Activated CD4-positive, alpha-beta memory T cell treated with anti-CD3 and anti-CD28 coated beads for 36 hours (primary cell): ENCODE measurements at regions of chr22 and their contacts with region 1.

Region 1: GRCh38 chr22:38941488-38941987 is 15.9 kb upstream of the APOBEC3A start:
- DNase-seq: peak; percentile 89
- H3K4me3 Mint-ChIP-seq: peak overlapping the region; percentile 45
- H3K27ac Mint-ChIP-seq: peak overlapping the region; percentile 80
- H3K4me1 Mint-ChIP-seq: peaks cover 35% of the 10 kb centered on the region
- H3K27me3 Mint-ChIP-seq: peaks cover 28% of the 10 kb centered on the region

Region 2: GRCh38 chr22:38793721-38794466 is 147.6 kb before region 1 on chr22 and contains the start of gene DNAL4:
- CTCF ChIA-PET with region 1: no interaction called
- POLR2A ChIA-PET with region 1: no interaction called
- intact Hi-C with region 1: no loop called
- DNase-seq: peak; percentile 95
- H3K4me3 Mint-ChIP-seq: peak within 1 kb of the TSS; percentile 79
- H3K27ac Mint-ChIP-seq: peak within 1 kb of the TSS; percentile 61
- H3K4me1 Mint-ChIP-seq: peaks cover 14% of the 10 kb centered on the region
- H3K27me3 Mint-ChIP-seq: peaks cover 23% of the 10 kb centered on the region
- total RNA-seq, gene DNAL4: 7.7 to 8.3 TPM

Region 3: DNA sequence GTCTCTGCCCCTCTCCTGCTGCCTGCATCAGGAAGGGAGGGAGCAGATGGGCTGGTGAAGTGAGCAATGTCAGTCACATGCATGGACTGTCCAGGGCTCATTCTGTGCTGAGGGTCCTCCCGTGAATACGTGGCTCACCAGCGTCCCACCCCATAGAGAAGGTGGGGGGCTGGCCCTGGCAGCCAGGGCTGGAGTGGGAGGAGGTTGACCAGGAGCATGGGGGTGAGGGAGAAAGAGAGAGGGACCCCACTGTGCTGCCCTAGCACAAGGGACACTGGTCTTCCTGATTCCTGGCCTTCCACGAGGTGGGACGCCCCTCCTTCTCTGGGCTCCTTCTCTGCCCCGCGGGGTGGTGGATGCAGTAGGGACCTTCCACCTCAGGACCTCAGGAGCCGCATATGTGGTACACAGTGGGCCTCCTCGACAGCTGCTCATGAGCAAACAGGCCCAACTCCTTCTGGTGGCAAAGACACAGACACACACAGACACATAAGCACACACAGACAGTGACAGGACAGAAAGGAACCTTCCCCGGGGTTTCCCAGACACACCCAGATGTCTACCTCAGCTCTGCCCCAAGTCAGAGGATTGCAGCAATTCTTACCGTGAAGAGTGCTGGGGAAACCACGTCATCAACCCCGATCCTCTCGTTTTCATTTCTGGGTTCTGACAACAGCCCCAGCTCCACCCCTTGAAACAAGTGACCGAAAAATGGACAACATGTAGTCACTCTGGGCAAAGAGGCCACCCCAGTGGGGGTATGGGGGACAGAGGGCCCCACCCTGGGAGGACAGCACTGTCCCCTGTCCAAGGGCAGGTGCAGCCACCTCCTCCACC is 12.3 kb after region 1 on chr22:
- CTCF ChIA-PET with region 1: interaction called, 6 read pairs
- POLR2A ChIA-PET with region 1: interaction called, 27 read pairs
- intact Hi-C with region 1: loop called (anchors 1 kb)
- DNase-seq: peak; percentile 93
- H3K4me3 Mint-ChIP-seq: peak overlapping the region; percentile 50
- H3K27ac Mint-ChIP-seq: peak overlapping the region; percentile 87
- H3K4me1 Mint-ChIP-seq: peaks cover 31% of the 10 kb centered on the region
- H3K27me3 Mint-ChIP-seq: peaks cover 2% of the 10 kb centered on the region

Region 4: GRCh38 chr22:39039306-39040126 is 98.0 kb after region 1 on chr22:
- CTCF ChIA-PET with region 1: no interaction called
- POLR2A ChIA-PET with region 1: no interaction called
- intact Hi-C with region 1: no loop called
- DNase-seq: no peak
- H3K4me3 Mint-ChIP-seq: peak overlapping the region; percentile 68
- H3K27ac Mint-ChIP-seq: peak overlapping the region; percentile 69
- H3K4me1 Mint-ChIP-seq: peaks cover 23% of the 10 kb centered on the region
- H3K27me3 Mint-ChIP-seq: no peaks in the 10 kb centered on the region

Region 5: GRCh38 chr22:39097098-39098020 is 155.8 kb after region 1 on chr22 and contains the start of gene APOBEC3H:
- CTCF ChIA-PET with region 1: no interaction called
- POLR2A ChIA-PET with region 1: interaction called, 3 read pairs
- intact Hi-C with region 1: loop called (anchors 10 kb)
- DNase-seq: peak; percentile 74
- H3K4me3 Mint-ChIP-seq: peak within 1 kb of the TSS; percentile 78
- H3K27ac Mint-ChIP-seq: peak within 1 kb of the TSS; percentile 91
- H3K4me1 Mint-ChIP-seq: peaks cover 78% of the 10 kb centered on the region
- H3K27me3 Mint-ChIP-seq: no peaks in the 10 kb centered on the region
- total RNA-seq, gene APOBEC3H: 23.6 to 25.3 TPM

Region 6: DNA sequence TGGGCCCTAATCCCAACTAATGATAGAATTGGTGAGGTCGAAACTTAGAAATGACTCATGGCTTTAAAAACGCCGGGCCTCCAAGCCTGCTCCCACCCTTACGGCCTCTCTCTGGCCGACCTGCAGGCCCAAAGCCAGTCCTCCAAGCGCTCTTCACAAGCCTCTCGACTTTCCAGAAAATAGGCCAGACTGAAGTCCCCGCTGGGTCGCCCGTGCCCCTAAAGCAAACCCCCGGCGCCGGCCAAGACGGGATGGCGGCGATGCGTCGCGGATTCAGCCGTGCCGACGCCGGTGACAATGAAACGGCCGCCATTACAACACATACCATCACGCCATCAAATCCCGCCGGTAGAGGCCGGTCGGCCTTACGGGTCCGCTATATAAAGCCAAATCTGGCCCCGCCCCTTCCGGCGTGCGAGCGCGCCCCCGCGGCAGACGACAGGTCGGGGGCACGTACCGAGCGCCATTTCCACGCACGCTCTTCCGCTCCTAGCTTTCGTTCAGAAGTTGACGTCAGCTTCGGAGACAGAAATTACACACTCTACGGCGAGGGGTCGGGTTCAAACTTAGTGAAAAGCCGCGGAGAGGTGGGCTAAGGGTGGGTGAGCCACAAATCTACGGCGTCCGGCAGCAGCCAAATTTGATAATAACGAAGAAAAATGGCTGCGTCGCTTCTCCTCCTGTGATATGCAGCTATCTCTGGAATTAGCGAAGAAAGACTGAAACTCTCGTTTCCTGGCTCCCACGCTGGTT is 377.9 kb after region 1 on chr22 and contains the start of gene RPL3:
- CTCF ChIA-PET with region 1: no interaction called
- POLR2A ChIA-PET with region 1: no interaction called
- intact Hi-C with region 1: no loop called
- DNase-seq: peak; percentile 97
- H3K4me3 Mint-ChIP-seq: peak within 1 kb of the TSS; percentile 100
- H3K27ac Mint-ChIP-seq: peak within 1 kb of the TSS; percentile 99
- H3K4me1 Mint-ChIP-seq: peaks cover 37% of the 10 kb centered on the region
- H3K27me3 Mint-ChIP-seq: no peaks in the 10 kb centered on the region
- total RNA-seq, gene RPL3: 2,986 to 3,013 TPM